ENCODE measurements at regions of chr5 and their contacts with region 1.

Region 1: GRCh38 chr5:137320056-137321045 is 178.8 kb downstream of the SPOCK1 start:
- DNase-seq: peak; percentile 69
- H3K4me3 ChIP-seq: no peak overlapping the region
- H3K27ac ChIP-seq: 0 out of 2 replicates have a peak overlapping the region, but pooled peaks have one; percentile 2
- H3K4me1 ChIP-seq: peaks cover 31% of the 10 kb centered on the region
- H3K27me3 ChIP-seq: no peaks in the 10 kb centered on the region

Region 2: DNA sequence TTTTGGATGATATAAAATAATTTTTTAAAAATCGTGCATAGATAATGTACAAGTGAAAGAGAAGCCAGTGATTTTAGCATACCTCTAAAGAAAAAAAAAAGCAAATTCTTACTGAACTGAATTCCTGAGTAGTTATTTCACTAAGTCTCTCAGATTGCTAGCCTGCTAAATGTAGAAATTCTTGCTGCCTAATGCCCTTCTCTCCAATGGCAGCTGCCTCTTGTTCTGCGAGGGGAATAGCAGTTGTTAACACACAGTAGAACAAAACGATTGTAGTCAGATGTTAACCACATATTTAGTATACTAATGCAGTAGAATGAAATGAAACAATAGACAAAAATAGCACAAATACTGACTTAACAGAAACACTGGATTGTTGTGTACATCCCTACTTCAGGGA is 1160.9 kb before region 1 on chr5:
- in situ Hi-C with region 1: no loop called
- DNase-seq: peak; percentile 58
- H3K4me3 ChIP-seq: no peak overlapping the region
- H3K27ac ChIP-seq: peak overlapping the region; percentile 6; the same call in 1 of the 2 replicates
- H3K4me1 ChIP-seq: peaks cover 20% of the 10 kb centered on the region
- H3K27me3 ChIP-seq: no peaks in the 10 kb centered on the region

Region 3: DNA sequence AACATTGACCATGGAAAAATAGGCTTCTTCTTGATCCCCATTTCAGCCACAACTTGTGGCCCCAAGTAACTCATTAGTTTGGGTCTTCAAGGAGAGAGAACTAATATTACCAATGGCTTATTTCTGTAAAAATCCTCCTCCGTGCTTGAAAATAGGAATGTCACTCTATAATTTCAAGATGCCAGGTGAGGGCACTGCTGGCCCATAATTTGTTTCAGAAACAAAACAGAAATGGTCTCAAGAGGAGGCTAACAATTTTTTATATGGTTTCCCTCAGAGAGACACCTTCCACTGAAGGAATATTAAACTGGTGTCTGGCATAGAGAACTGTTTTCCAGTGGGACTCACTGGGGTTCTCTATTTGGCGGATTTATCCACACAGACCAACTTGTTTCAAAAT is 518.0 kb before region 1 on chr5:
- in situ Hi-C with region 1: loop called (anchors 25 kb)
- DNase-seq: peak; percentile 58
- H3K4me3 ChIP-seq: no peak overlapping the region
- H3K27ac ChIP-seq: no peak overlapping the region
- H3K4me1 ChIP-seq: peaks cover 12% of the 10 kb centered on the region
- H3K27me3 ChIP-seq: no peaks in the 10 kb centered on the region

Region 4: GRCh38 chr5:137822158-137822764 is 501.9 kb after region 1 on chr5:
- in situ Hi-C with region 1: no loop called
- DNase-seq: peak; percentile 49
- H3K4me3 ChIP-seq: no peak overlapping the region
- H3K27ac ChIP-seq: no peak overlapping the region
- H3K4me1 ChIP-seq: no peaks in the 10 kb centered on the region
- H3K27me3 ChIP-seq: no peaks in the 10 kb centered on the region; the same call in 1 of the 2 replicates